Activated T-helper 2 cell treated with anti-CD3 and anti-CD28 coated beads, Interferon-gamma antibody, Interleukin-2, Interleukin-4, amounts not matched to agents 10 μg/mL and 5 μg/mL and 100 μg/mL, durations not matched to agents 14 hours and 24 hours and 36 hours (primary cell): ENCODE measurements at regions of chr13 and their contacts with region 1.

Region 1: DNA sequence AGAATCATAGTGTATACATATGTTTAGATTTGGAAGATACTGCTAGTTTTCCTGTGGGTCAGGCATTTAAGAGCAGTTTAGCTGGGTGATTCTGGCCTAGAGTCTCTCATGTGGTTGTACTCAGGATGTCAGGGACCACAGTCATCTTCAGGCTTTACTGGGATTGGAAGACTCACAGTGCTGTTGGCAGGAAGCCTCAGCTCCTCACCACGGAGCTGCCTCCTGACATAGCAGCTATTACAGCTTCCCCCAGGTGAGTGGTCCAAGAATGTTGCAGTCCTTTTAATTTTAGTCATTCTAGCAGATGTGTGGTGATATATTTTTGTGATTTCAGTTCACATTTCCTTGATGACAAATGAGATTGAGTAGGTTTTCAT is 16.9 kb upstream of the GPR18 start:
- DNase-seq: peak; percentile 38
- H3K4me3 Mint-ChIP-seq: peak overlapping the region; percentile 11
- H3K27ac Mint-ChIP-seq: peak overlapping the region; percentile 87
- H3K4me1 Mint-ChIP-seq: peaks cover 83% of the 10 kb centered on the region
- H3K27me3 Mint-ChIP-seq: no peaks in the 10 kb centered on the region

Region 2: DNA sequence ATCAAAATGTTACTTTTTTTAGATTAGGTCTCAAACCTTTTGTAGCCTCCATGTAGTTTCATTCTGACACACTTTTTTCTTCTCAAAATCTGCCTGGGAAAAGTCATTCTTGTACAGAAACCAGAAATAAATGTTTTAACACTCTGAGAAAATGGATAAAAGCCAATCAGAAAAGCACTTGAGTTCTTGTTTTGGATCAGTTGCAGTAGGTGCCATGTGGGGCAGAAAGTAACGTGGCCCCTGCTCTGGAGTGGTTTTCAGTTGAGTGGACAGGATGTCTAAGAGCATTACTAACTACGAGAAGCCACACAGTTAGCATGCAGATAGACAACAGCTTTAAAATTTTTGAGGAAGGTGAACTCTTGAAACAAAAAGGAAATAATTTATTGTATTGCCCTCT is 13.0 kb after region 1 on chr13:
- intact Hi-C with region 1: loop called (anchors 2 kb)
- DNase-seq: peak; percentile 38
- H3K4me3 Mint-ChIP-seq: peak overlapping the region; percentile 3
- H3K27ac Mint-ChIP-seq: peak overlapping the region; percentile 80
- H3K4me1 Mint-ChIP-seq: peaks cover 75% of the 10 kb centered on the region
- H3K27me3 Mint-ChIP-seq: no peaks in the 10 kb centered on the region

Region 3: DNA sequence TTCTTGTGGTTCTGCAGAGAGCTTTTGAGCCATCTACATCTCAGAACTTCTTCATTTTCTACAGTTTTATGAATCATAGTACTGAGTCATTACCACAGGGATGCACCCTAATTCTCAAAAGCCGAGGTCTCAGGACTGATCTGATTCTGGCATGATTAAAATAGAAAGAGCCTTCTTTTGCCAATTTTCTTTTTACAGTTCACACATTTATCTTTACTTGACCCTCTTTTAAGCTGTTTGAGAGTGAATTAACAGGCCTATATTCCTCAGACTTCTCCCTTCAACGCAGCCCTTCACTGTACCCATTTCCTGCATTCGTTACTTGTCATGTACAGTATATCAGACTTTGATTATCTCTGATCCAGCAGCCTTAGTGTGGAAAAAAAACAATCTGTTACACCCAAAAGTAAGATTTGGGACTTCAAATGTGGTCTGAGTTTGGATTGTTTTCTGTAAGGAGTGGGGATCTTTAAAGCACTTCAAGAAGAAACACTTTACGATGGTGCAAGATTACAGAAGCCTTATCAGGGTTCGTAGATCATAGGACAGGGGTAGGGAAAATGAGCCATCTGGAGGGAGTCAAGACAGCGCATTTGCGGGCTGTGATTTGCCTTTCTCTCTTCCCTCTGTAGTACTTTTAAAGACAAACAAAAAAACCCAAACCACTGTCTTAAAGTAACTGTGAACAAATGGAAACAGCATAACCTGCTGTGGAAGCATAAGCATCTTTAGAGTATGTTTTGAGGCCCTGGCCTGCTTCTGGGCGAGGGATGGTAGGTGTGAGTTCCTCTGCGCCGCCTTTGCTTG is 47.4 kb after region 1 on chr13:
- intact Hi-C with region 1: loop called (anchors 2 kb)
- DNase-seq: peak; percentile 44
- H3K4me3 Mint-ChIP-seq: peak overlapping the region; percentile 31
- H3K27ac Mint-ChIP-seq: peak overlapping the region; percentile 96
- H3K4me1 Mint-ChIP-seq: peaks cover 60% of the 10 kb centered on the region
- H3K27me3 Mint-ChIP-seq: no peaks in the 10 kb centered on the region